MCF 10A (cell line): ENCODE measurements at regions of chr6 and their contacts with region 1.

Region 1: GRCh38 chr6:12313992-12314805 is 24.0 kb downstream of the EDN1 start:
- DNase-seq: peak; percentile 95
- H3K4me3 Mint-ChIP-seq: peak overlapping the region; percentile 62
- H3K27ac Mint-ChIP-seq: peak overlapping the region; percentile 88
- H3K4me1 Mint-ChIP-seq: peaks cover 39% of the 10 kb centered on the region
- H3K27me3 Mint-ChIP-seq: no peaks in the 10 kb centered on the region
- CTCF ChIP-seq: no peak

Region 2: GRCh38 chr6:12103158-12103557 is 211.0 kb before region 1 on chr6:
- CTCF ChIA-PET with region 1: no interaction called
- POLR2A ChIA-PET with region 1: no interaction called
- intact Hi-C with region 1: no loop called
- DNase-seq: no peak
- H3K4me3 Mint-ChIP-seq: no peak overlapping the region
- H3K27ac Mint-ChIP-seq: no peak overlapping the region
- H3K4me1 Mint-ChIP-seq: peaks cover 4% of the 10 kb centered on the region
- H3K27me3 Mint-ChIP-seq: no peaks in the 10 kb centered on the region
- CTCF ChIP-seq: no peak

Region 3: DNA sequence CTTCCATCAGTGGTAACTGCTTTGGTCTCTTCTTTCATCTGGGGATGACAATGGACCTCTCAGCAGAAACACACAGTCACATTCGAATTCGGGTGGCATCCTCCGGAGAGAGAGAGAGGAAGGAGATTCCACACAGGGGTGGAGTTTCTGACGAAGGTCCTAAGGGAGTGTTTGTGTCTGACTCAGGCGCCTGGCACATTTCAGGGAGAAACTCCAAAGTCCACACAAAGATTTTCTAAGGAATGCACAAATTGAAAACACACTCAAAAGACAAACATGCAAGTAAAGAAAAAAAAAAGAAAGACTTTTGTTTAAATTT is 18.0 kb before region 1 on chr6:
- CTCF ChIA-PET with region 1: interaction called, 50 read pairs
- POLR2A ChIA-PET with region 1: interaction called, 371 read pairs
- intact Hi-C with region 1: loop called (anchors 2 kb)
- DNase-seq: peak; percentile 82
- H3K4me3 Mint-ChIP-seq: peak overlapping the region; percentile 62
- H3K27ac Mint-ChIP-seq: peak overlapping the region; percentile 95
- H3K4me1 Mint-ChIP-seq: peaks cover 56% of the 10 kb centered on the region
- H3K27me3 Mint-ChIP-seq: no peaks in the 10 kb centered on the region
- CTCF ChIP-seq: no peak

Region 4: DNA sequence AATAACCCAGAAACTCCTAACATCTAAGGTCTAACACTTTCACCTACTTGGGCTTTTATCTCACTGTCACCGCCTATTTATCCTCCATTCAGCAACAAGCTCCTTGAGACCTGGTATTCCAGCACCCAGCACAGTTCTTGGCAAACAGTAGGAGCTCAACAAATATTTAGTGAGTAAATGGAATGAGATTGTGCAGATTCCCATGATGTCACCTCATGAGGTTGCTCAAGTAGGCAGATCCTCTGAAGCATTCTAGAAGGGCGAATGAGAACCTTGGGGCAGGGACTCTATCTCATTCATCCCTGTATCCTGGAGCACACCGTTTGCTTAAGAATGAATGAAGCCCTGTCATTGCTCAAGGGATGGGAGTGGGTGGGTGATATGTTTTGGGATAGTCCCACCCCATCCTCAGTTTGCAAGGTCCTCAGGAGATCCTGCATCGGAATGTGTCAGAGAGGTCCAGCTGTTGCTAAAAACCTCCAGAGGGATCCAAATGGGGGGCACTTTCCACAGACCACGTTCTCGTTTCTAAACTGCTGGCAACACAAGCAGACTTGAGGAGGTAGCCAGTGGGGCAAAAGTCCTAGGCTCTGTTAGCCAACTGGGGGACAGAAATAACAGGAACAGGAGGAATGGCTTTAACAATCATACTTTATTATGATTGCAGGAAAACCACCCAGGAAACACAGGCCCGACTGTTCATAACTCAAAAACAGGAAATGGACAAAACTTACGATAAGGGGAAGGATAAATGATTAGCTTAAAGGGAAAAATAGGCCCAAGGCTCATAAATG is 18.0 kb after region 1 on chr6:
- CTCF ChIA-PET with region 1: interaction called, 13 read pairs
- POLR2A ChIA-PET with region 1: interaction called, 252 read pairs
- intact Hi-C with region 1: loop called (anchors 2 kb)
- DNase-seq: peak; percentile 47
- H3K4me3 Mint-ChIP-seq: no peak overlapping the region
- H3K27ac Mint-ChIP-seq: no peak overlapping the region
- H3K4me1 Mint-ChIP-seq: peaks cover 35% of the 10 kb centered on the region
- H3K27me3 Mint-ChIP-seq: no peaks in the 10 kb centered on the region
- CTCF ChIP-seq: no peak

Region 5: GRCh38 chr6:12348530-12349511 is 34.6 kb after region 1 on chr6:
- CTCF ChIA-PET with region 1: interaction called, 4 read pairs
- POLR2A ChIA-PET with region 1: interaction called, 111 read pairs
- intact Hi-C with region 1: loop called (anchors 2 kb)
- DNase-seq: peak; percentile 82
- H3K4me3 Mint-ChIP-seq: peak overlapping the region; percentile 19
- H3K27ac Mint-ChIP-seq: peak overlapping the region; percentile 95
- H3K4me1 Mint-ChIP-seq: peaks cover 32% of the 10 kb centered on the region
- H3K27me3 Mint-ChIP-seq: no peaks in the 10 kb centered on the region
- CTCF ChIP-seq: no peak

Region 6: GRCh38 chr6:12472601-12473038 is 158.4 kb after region 1 on chr6:
- CTCF ChIA-PET with region 1: interaction called, 3 read pairs
- POLR2A ChIA-PET with region 1: interaction called, 11 read pairs
- intact Hi-C with region 1: loop called (anchors 1 kb)
- DNase-seq: peak; percentile 96
- H3K4me3 Mint-ChIP-seq: no peak overlapping the region
- H3K27ac Mint-ChIP-seq: peak overlapping the region; percentile 49
- H3K4me1 Mint-ChIP-seq: peaks cover 41% of the 10 kb centered on the region
- H3K27me3 Mint-ChIP-seq: no peaks in the 10 kb centered on the region
- CTCF ChIP-seq: no peak

Region 7: GRCh38 chr6:12504319-12504966 is 190.2 kb after region 1 on chr6:
- CTCF ChIA-PET with region 1: no interaction called
- POLR2A ChIA-PET with region 1: interaction called, 4 read pairs
- intact Hi-C with region 1: loop called (anchors 1 kb)
- DNase-seq: peak; percentile 61
- H3K4me3 Mint-ChIP-seq: no peak overlapping the region
- H3K27ac Mint-ChIP-seq: no peak overlapping the region
- H3K4me1 Mint-ChIP-seq: peaks cover 7% of the 10 kb centered on the region
- H3K27me3 Mint-ChIP-seq: no peaks in the 10 kb centered on the region
- CTCF ChIP-seq: peak; percentile 55

Region 8: GRCh38 chr6:12576389-12576788 is 262.2 kb after region 1 on chr6:
- CTCF ChIA-PET with region 1: interaction called, 4 read pairs
- POLR2A ChIA-PET with region 1: interaction called, 24 read pairs
- intact Hi-C with region 1: no loop called
- DNase-seq: peak; percentile 34
- H3K4me3 Mint-ChIP-seq: no peak overlapping the region
- H3K27ac Mint-ChIP-seq: peak overlapping the region; percentile 16
- H3K4me1 Mint-ChIP-seq: peaks cover 56% of the 10 kb centered on the region
- H3K27me3 Mint-ChIP-seq: no peaks in the 10 kb centered on the region
- CTCF ChIP-seq: no peak